A673 (cell line): ENCODE measurements at regions of chr6 and their contacts with region 1.

Region 1: GRCh38 chr6:167495506-167496401 is 170.9 kb downstream of the TTLL2 start:
- DNase-seq: no peak
- H3K4me3 ChIP-seq: no peak overlapping the region
- H3K27ac ChIP-seq: no peak overlapping the region
- H3K4me1 ChIP-seq: no peaks in the 10 kb centered on the region
- H3K27me3 ChIP-seq: no peaks in the 10 kb centered on the region
- CTCF ChIP-seq: no peak

Region 2: GRCh38 chr6:167568407-167569024 is 72.8 kb after region 1 on chr6:
- CTCF ChIA-PET with region 1: no interaction called
- POLR2A ChIA-PET with region 1: interaction called, 14 read pairs
- intact Hi-C with region 1: no loop called
- DNase-seq: no peak
- H3K4me3 ChIP-seq: no peak overlapping the region
- H3K27ac ChIP-seq: no peak overlapping the region
- H3K4me1 ChIP-seq: no peaks in the 10 kb centered on the region
- H3K27me3 ChIP-seq: no peaks in the 10 kb centered on the region
- CTCF ChIP-seq: no peak

Region 3: DNA sequence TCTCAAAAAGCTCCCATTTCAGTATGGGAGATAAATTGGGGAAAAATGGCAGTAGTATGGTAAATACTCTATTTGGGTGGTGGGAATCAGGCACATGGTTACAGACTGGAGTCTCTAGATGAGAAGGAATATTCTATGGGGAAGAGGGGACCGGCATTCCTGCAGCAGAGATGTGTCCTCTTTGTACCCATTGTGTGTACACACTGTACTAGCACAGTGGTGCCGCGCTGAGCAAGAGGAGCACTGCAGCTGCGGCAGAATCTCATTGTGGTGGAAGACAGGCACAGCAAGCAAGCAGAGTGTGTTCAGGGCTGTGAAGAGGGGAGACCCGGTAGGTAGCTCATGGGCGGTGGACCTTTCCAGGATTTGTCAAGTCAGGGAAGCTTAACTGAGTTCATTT is 344.0 kb after region 1 on chr6:
- CTCF ChIA-PET with region 1: no interaction called
- POLR2A ChIA-PET with region 1: no interaction called
- intact Hi-C with region 1: no loop called
- DNase-seq: peak; percentile 55
- H3K4me3 ChIP-seq: peak overlapping the region; percentile 3
- H3K27ac ChIP-seq: no peak overlapping the region
- H3K4me1 ChIP-seq: peaks cover 48% of the 10 kb centered on the region
- H3K27me3 ChIP-seq: peaks cover 5% of the 10 kb centered on the region
- CTCF ChIP-seq: no peak